ENCODE measurements at regions of chr20 and their contacts with region 1.

Region 1: DNA sequence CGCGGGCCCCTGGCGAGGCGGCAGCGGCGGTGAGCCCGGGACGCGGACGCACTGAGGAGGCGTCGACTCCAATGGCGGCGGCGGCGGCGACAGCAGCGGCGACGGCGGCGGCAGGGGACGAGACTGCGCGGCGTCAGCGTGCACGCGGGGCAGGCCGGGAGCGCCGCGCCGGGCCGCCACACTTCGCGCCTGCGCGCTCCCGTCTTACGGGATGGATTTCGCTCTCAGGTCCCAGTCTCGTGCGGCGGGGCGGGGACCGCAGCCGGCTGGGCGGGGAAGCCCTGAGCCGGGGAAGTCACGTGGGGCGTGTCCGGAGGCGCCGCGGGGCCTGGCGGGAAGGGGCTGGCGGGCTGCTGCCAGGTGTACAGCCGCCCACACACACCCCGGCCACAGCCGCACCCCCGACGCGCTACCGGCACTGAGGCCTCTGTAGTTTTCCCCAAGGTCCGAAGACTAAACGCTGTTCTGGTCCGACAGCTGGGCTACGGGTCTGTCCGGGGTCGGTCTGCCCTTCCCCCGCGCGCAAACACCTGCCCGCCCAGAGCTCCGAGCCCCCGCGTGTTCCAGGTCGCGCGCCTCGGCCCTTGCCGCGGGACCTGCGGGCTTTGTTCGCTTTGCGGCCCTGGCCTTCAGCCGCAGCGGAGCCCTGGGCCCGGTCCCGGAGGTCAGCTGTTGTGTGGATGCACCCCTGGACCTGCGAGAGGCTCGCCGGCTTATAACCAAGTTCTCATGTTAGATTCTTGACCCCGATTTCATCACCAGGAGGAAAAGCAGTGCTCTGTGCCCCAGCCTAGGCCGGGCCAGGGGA is at the start of gene YTHDF1:
- DNase-seq: peak; percentile 98
- ATAC-seq: peak; percentile 91
- H3K4me3 ChIP-seq: peak within 1 kb of the TSS in 4 of 5 experiments; percentile 57 to 80 (median 71)
- H3K4me3 Mint-ChIP-seq: peak within 1 kb of the TSS; percentile 88
- H3K27ac ChIP-seq: peak within 1 kb of the TSS; percentile 52 to 88
- H3K27ac Mint-ChIP-seq: peak within 1 kb of the TSS; percentile 88
- H3K4me1 ChIP-seq: peaks cover 16 to 30% of the 10 kb centered on the region in 2 donors
- H3K4me1 Mint-ChIP-seq: peaks cover 37% of the 10 kb centered on the region
- H3K27me3 ChIP-seq: peaks cover 0 to 7% (median 0%) of the 10 kb centered on the region in 4 experiments
- H3K27me3 Mint-ChIP-seq: peaks cover 8% of the 10 kb centered on the region
- CTCF ChIP-seq: no peak
- total RNA-seq, gene YTHDF1: 40.2 and 40.5 TPM in 2 replicates

Region 2: DNA sequence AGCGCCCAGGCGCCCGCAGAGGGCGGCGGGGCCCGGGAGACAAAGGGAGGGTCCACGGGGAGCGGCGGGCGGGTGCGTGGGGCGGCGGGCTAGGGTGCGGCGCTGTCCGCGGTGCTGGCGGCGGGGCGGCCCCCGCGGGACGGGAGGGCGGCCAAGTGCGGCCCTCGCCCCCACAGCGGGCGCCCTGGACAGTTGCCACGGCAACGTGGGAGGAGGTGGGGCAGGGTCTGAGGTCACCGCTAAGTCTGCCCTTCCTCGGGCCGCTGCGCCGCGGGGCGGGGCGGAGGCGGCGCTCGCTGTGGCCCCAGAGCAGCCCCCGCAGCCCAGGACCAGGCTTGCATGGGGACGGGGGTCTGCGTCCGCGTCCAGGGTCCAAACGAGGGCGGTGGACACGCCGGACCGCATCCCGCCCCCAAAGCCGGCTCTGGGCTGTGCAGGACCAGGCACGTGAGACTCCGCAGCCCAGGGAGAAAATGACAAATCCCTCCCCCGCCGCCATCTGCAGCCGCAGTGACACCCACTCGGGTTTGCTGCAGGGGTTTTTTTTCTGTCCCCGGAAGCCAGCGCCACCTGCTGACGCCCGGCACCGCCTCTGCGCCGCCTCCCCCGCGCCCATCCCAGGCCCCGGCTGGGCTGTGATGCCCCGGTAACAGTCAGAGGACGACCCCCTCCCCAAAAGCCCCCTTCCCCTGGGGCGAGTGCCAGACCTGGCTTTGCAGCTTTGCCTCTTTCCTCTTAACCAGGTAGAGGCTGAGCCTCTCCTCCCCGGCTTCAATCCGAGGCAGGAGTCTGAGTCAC is 37.2 kb before region 1 on chr20:
- CTCF ChIA-PET with region 1: no interaction called
- POLR2A ChIA-PET with region 1: no interaction called
- intact Hi-C with region 1: loop called (anchors 1 kb)
- DNase-seq: peak; percentile 83
- ATAC-seq: peak; percentile 77
- H3K4me3 ChIP-seq: peak overlapping the region in 4 of 5 experiments; percentile 24 to 65 (median 42)
- H3K4me3 Mint-ChIP-seq: peak overlapping the region; percentile 77
- H3K27ac ChIP-seq: no peak overlapping the region
- H3K27ac Mint-ChIP-seq: no peak overlapping the region
- H3K4me1 ChIP-seq: peaks cover 26 to 52% of the 10 kb centered on the region in 2 donors
- H3K4me1 Mint-ChIP-seq: peaks cover 16% of the 10 kb centered on the region
- H3K27me3 ChIP-seq: peaks cover 0 to 71% (median 31%) of the 10 kb centered on the region in 4 experiments
- H3K27me3 Mint-ChIP-seq: peaks cover 19% of the 10 kb centered on the region
- CTCF ChIP-seq: peak; percentile 69

Region 3: DNA sequence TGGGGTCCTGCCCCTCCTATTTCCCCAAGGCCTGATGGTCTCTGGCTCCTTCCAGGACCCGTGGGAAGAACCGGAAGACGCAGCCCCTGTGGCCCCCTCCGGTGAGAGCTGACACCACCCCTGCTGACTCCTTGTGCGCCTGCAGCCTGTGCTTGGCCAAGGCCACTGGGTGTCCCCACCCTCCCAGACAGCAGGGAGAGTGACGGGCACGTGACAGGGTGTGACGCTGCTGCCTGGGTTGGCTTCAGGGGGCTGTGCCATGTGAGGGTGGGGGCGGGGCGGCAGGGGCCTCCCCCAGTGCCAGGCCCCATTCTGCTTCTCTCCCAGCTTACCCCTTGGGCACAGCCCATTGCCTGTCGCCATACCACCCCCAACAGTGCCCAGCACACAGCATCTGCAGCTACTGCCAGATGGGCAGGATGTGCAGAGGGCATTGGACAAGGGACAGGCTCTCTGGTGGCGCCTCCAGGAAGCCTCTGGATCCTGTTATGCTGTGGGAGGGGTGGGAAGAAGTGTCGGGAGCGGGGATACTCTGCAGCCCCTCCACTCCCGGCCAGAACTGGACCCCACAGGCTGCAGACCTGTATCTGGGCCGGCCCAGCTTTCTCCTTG is 22.4 kb after region 1 on chr20:
- CTCF ChIA-PET with region 1: no interaction called
- POLR2A ChIA-PET with region 1: no interaction called
- intact Hi-C with region 1: no loop called
- DNase-seq: no peak
- ATAC-seq: no peak
- H3K4me3 ChIP-seq: no peak overlapping the region
- H3K4me3 Mint-ChIP-seq: no peak overlapping the region
- H3K27ac ChIP-seq: no peak overlapping the region
- H3K27ac Mint-ChIP-seq: no peak overlapping the region
- H3K4me1 ChIP-seq: peaks cover 0 to 4% of the 10 kb centered on the region in 2 donors
- H3K4me1 Mint-ChIP-seq: peaks cover 3% of the 10 kb centered on the region
- H3K27me3 ChIP-seq: peaks cover 0 to 11% (median 4%) of the 10 kb centered on the region in 4 experiments
- H3K27me3 Mint-ChIP-seq: peaks cover 5% of the 10 kb centered on the region
- CTCF ChIP-seq: no peak

Measured in B cell (primary cell).